ENCODE measurements at regions of chr11 and their contacts with region 1.

Region 1: DNA sequence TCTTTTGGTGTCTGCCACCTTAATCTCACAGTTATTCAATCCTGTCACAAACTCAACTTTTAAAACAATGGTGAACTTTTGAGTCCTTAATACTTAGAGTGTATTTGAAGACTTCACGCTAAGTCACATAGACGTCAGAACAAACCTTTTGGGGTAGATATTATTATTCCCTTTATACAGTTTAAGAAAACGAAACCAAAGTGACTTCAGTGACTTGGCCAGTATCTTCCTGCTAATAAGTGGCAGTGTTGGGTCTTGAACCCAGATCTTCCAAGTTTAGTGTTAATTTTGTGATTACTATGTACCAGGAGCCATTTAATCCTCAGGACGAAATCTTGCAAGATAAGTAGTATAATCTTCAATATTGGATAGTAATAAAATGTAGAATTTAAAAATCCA is 694 bp downstream of the CEP295 start:
- DNase-seq: no peak

Region 2: DNA sequence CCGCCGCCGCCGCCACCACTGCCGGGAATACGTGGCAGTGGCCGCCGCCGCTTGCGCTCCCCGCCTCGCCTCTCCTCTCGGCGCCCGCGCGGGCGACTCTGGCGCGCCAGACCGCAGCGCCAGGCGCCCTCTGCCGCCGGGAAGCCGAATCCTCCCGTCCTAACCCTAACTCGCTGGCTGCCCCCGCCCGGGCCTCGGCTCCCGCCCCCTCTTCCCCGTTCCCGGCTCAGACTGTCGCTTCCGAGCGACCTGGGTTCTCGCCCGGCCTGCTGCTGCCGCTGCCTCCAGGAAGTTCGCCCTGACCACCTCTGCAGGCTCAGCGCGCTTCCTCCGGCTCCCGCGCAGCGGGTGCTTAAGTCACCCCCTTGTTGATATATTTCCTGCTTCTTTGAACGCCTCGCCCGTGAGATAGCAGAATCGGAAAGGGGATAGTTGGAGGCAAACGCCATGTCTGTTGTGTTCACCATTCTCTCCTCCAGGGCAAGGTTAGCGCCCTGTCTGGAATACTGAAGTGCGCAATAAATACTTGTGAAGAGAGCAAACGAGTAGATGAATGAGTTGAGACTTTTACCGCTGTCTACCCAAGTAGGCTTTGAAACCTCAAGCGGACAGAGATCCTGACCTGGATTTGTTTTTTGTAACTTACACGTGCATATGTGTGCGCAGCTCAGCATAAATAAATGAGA is 118.7 kb before region 1 on chr11 and contains the start of gene SMCO4:
- intact Hi-C with region 1: loop called (anchors 5 kb)
- DNase-seq: peak; percentile 91
- total RNA-seq, gene SMCO4: 40.0 TPM

Region 3: DNA sequence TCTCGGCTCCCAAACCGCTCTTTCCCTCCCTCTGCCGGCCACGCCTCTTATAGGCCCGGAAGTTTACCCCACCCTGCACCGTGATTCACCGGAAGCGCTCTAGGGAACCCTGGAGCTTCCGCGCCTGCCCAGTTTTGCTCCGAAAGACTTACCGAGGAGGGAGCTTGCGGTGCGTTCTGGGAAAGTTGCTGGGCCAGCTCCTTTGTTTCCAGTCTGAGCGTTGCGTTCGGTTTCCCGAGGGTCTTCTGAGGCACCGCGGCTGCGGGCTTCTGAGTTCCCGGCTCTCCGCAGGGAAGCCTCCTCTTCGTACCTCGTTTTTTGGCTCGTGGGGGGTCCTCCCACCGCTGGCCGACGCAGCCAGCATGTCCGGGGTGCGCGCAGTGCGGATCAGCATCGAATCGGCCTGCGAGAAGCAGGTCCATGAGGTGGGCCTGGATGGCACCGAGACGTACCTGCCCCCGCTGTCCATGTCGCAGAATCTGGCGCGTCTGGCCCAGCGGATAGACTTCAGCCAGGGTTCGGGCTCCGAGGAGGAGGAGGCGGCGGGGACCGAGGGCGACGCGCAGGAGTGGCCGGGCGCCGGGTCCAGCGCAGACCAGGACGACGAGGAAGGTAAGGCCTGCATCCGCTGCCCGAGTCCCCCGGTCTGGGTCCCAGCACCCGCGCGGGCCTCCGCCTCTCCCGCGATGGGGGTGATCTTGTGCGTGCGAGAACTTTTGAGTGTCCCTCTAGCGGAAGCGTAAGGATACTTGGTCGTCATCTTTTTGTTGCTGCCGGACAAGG is 122.2 kb after region 1 on chr11 and contains the start of gene MED17:
- intact Hi-C with region 1: loop called (anchors 10 kb)
- DNase-seq: peak; percentile 97
- total RNA-seq, gene MED17: 24.3 TPM